T-cell (primary cell): ENCODE measurements at regions of chr20 and their contacts with region 1.

Region 1: DNA sequence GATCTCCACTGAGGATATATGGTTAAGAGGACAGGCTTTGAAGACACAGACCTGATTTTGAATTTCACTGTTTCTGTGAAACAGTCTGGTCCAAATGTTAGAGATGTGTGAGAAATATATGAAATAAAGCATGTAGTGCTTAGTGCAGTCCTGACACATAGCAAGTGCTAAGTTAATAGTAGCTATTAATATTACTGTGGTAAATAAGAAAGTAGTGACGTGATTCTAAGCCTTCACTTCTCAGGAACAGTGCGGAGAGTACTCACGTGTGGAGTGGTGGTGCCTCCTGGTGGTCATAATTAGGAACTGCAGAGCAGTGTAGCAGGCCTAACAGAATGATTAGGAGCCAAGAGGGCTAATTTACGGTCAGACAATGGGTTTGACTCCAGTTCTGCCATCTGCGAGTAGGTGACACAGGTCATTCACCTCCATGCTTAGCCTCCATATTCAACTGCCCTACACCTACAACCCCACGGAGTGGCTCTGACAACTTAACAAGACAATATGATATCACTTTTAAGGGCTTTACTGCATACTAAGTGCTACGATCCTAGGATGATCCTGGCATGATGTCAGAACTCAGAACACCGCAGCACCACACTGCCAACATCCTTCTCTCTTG is 106.2 kb downstream of the JPH2 start:
- DNase-seq: peak; percentile 56 to 91 (median 75)
- ATAC-seq: peak; percentile 91 to 96 (median 94)
- H3K4me3 ChIP-seq: no peak overlapping the region
- H3K4me3 Mint-ChIP-seq: peak overlapping the region in 1 of 3 donors; percentile 21
- H3K27ac ChIP-seq: no peak overlapping the region
- H3K27ac Mint-ChIP-seq: no peak overlapping the region
- H3K4me1 ChIP-seq: peaks cover 10 to 11% of the 10 kb centered on the region in 2 experiments
- H3K4me1 Mint-ChIP-seq: peaks cover 22 to 35% (median 24%) of the 10 kb centered on the region in 3 donors
- H3K27me3 ChIP-seq: no peaks in the 10 kb centered on the region
- H3K27me3 Mint-ChIP-seq: no peaks in the 10 kb centered on the region

Region 2: DNA sequence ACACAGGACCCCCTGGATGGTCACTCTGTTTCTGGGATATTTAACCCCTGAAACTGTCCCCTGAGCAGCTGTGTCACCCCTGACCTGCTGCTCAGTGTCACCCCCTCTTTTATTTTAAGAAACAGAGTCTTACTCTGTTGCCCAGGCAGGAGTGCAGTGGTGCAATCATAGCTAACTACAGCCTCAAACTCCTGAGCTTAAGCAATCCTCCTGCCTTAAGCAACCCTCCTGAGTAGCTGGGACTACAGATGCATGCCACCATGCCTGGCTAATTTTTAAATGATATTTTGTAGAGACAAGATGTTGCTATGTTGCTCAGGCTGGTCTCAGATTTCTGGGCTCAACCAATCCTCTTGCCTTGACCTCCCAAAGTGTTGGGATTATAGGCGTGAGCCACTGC is 332.5 kb before region 1 on chr20:
- CTCF ChIA-PET with region 1: interaction called, 4 to 18 read pairs
- POLR2A ChIA-PET with region 1: no interaction called
- DNase-seq: no peak
- ATAC-seq: no peak
- H3K4me3 ChIP-seq: no peak overlapping the region
- H3K4me3 Mint-ChIP-seq: no peak overlapping the region
- H3K27ac ChIP-seq: no peak overlapping the region
- H3K27ac Mint-ChIP-seq: no peak overlapping the region
- H3K4me1 ChIP-seq: peaks cover 2 to 37% of the 10 kb centered on the region in 2 experiments
- H3K4me1 Mint-ChIP-seq: peaks cover 32 to 37% (median 33%) of the 10 kb centered on the region in 3 donors
- H3K27me3 ChIP-seq: peaks cover 0 to 44% of the 10 kb centered on the region in 2 experiments
- H3K27me3 Mint-ChIP-seq: peaks cover 0 to 15% of the 10 kb centered on the region in 2 donors

Region 3: GRCh38 chr20:44001667-44002596 is 78.8 kb before region 1 on chr20:
- CTCF ChIA-PET with region 1: no interaction called
- POLR2A ChIA-PET with region 1: no interaction called
- DNase-seq: no peak
- ATAC-seq: no peak
- H3K4me3 ChIP-seq: no peak overlapping the region
- H3K4me3 Mint-ChIP-seq: no peak overlapping the region
- H3K27ac ChIP-seq: no peak overlapping the region
- H3K27ac Mint-ChIP-seq: no peak overlapping the region
- H3K4me1 ChIP-seq: peaks cover 0 to 3% of the 10 kb centered on the region in 2 experiments
- H3K4me1 Mint-ChIP-seq: peaks cover 6 to 31% (median 7%) of the 10 kb centered on the region in 3 donors
- H3K27me3 ChIP-seq: peaks cover 0 to 25% of the 10 kb centered on the region in 2 experiments
- H3K27me3 Mint-ChIP-seq: peaks cover 15 to 18% of the 10 kb centered on the region in 2 donors

Region 4: DNA sequence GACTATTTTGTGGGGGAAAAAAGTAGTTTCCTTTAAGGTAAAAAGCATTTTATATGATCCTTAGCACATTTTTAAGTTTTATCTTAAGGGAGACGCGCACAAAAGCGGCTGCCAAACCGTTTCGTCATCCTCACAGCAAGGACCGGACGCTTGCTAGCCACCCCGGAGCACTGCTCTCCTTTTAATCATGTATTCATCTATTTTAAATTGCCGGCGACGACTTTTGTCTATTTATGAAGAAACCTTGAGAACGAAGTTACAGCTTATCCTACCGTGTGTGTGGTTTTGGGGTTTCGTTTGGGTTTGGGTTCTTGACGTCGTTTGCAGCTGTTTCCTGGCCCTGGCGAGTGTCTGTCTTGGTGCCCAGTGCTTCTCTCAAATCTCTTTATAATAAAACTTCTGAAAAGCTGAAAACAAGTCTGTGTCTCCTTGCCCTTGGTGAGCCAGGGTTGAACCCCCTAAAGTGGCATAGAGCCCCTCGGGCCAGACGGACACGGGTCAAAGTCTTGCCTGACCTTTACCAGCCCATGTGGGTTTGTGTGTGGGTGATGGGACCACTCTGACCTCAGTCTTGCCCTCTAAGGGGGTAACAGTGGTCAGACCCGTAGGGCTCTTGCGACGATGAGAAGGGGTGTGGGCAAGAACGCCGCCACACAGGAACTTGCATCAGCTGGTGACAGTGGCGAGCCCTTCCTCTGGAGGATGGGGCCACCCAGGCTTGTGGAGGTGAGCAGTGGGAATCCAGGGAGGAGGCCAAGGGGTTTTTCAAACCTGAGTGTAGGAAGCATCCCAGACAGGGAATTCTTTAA is 11.3 kb before region 1 on chr20:
- CTCF ChIA-PET with region 1: interaction called in 1 of 2 experiments, 10 read pairs
- POLR2A ChIA-PET with region 1: no interaction called
- DNase-seq: peak; percentile 50 to 93 (median 81)
- ATAC-seq: peak; percentile 59 to 68 (median 67)
- H3K4me3 ChIP-seq: peak overlapping the region; percentile 51 to 52
- H3K4me3 Mint-ChIP-seq: peak overlapping the region; percentile 76 to 83 (median 81)
- H3K27ac ChIP-seq: peak overlapping the region; percentile 94
- H3K27ac Mint-ChIP-seq: peak overlapping the region; percentile 97 to 99
- H3K4me1 ChIP-seq: peaks cover 56 to 82% of the 10 kb centered on the region in 2 experiments
- H3K4me1 Mint-ChIP-seq: peaks cover 80 to 90% (median 81%) of the 10 kb centered on the region in 3 donors
- H3K27me3 ChIP-seq: peaks cover 0 to 28% of the 10 kb centered on the region in 2 experiments
- H3K27me3 Mint-ChIP-seq: peaks cover 0 to 8% of the 10 kb centered on the region in 2 donors

Region 5: GRCh38 chr20:44109951-44110361 is 29.2 kb after region 1 on chr20:
- CTCF ChIA-PET with region 1: no interaction called
- POLR2A ChIA-PET with region 1: no interaction called
- DNase-seq: no peak
- ATAC-seq: no peak
- H3K4me3 ChIP-seq: no peak overlapping the region
- H3K4me3 Mint-ChIP-seq: no peak overlapping the region
- H3K27ac ChIP-seq: no peak overlapping the region
- H3K27ac Mint-ChIP-seq: no peak overlapping the region
- H3K4me1 ChIP-seq: no peaks in the 10 kb centered on the region
- H3K4me1 Mint-ChIP-seq: no peaks in the 10 kb centered on the region
- H3K27me3 ChIP-seq: peaks cover 2 to 49% of the 10 kb centered on the region in 2 experiments
- H3K27me3 Mint-ChIP-seq: peaks cover 31 to 57% of the 10 kb centered on the region in 2 donors